Stomach (tissue), 19 donors: ENCODE measurements at regions of chr13 and their contacts with region 1.

Region 1: DNA sequence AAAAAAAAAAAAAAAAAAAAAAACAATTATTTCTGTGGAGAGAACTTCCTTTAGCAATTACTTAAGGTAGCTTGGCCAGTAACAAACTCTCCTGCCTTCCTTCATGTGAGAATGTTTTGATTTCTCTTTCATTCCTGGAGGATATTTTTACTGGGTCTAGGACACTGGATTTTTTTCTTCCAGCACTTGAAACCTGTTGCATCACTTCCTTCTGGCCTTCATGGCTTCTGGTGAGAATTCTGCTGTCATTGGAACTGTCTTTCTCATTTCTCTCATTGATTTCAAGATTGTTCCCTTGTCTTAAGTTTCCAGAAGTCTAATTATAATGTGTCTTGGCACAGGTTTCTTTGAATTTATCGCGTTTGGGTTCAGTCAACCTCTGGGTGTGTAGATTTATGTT is 19.3 kb upstream of the RAB20 start:
- DNase-seq: no peak
- H3K4me3 ChIP-seq: no peak overlapping the region
- H3K27ac ChIP-seq: no peak overlapping the region
- H3K4me1 ChIP-seq: peaks cover 2 to 12% (median 9%) of the 10 kb centered on the region in 4 donors
- H3K27me3 ChIP-seq: no peaks in the 10 kb centered on the region
- CTCF ChIP-seq: no peak
- EP300 ChIP-seq: no peak
- POLR2A ChIP-seq: no peak

Region 2: DNA sequence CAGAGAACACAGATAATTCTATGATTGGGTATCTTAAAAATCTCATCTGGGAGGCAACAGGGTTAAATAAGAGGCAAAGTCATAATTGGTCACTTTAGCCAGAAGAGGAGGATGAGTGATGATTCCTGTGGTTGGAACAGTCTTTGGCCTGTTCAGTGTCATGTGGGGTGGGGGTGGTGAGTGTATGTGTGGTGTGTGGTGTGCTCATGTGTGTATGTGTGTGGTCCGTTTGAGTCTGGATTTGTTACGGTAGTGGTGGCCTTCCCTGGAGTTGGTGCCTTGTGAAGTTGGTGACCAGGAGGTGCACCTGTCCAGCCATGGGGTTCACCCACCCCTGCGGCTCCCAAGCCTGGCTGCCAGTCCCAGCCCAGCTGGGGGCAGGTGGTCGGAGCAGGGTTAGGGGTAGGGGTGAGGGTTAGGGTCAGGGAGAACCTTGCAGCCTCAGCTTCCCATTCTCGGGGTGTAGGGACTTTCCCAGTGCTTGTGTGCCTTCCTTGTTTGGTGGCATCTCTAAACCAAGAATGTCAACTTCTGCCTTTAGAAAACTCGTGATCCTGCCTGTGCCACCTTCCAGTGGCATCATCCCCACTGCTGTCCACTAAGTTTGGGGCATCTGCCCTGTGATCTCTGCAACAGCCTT is 116.8 kb before region 1 on chr13:
- intact Hi-C with region 1: loop called (anchors 10 kb)
- DNase-seq: no peak
- H3K4me3 ChIP-seq: no peak overlapping the region
- H3K27ac ChIP-seq: peak overlapping the region in 1 of 5 donors; percentile 30
- H3K4me1 ChIP-seq: no peaks in the 10 kb centered on the region
- H3K27me3 ChIP-seq: no peaks in the 10 kb centered on the region
- CTCF ChIP-seq: no peak
- EP300 ChIP-seq: no peak
- POLR2A ChIP-seq: no peak